Mammary epithelial cell (primary cell): ENCODE measurements at regions of chr4 and their contacts with region 1.

Region 1: DNA sequence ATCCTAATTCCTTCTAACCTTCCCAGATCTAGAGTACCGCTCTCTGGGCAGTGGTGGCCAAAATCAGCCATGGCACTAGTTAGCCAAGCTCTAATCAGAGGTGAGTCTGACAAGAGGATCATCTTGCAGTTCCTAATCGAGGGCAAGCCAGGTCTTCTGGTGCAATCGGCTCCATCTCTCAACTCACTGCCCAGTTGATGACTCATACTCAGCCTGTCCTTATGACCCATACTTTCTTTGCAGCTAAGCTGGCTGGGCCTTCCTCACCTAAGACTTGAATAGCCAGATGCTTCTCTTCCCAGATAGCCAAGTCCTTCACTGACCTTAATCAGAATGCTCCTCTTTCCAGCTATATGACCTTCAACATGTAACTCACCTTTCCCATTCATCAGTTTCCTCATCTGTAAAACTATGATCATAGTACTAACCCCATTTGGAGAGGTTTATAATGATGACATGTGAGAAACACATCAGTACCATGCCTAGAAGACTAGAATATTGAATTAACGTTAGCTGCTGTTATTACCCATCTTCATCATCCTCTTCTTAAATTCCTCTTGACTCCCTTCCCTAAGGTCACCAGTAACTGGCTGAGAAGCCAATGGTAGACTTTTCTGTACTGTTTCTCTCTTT is 57.1 kb downstream of the RELL1 start:
- DNase-seq: peak; percentile 60
- H3K4me3 ChIP-seq: no peak overlapping the region
- H3K27ac ChIP-seq: no peak overlapping the region
- H3K4me1 ChIP-seq: peaks cover 5% of the 10 kb centered on the region
- H3K27me3 ChIP-seq: no peaks in the 10 kb centered on the region
- CTCF ChIP-seq: no peak

Region 2: GRCh38 chr4:37588150-37588549 is 40.9 kb before region 1 on chr4:
- CTCF ChIA-PET with region 1: no interaction called
- dilution Hi-C with region 1: loop called (anchors 5 kb)
- in situ Hi-C with region 1: no loop called
- intact Hi-C with region 1: no loop called
- DNase-seq: no peak
- H3K4me3 ChIP-seq: no peak overlapping the region
- H3K27ac ChIP-seq: no peak overlapping the region
- H3K4me1 ChIP-seq: no peaks in the 10 kb centered on the region
- H3K27me3 ChIP-seq: no peaks in the 10 kb centered on the region
- CTCF ChIP-seq: no peak

Region 3: GRCh38 chr4:37603070-37603468 is 26.0 kb before region 1 on chr4:
- CTCF ChIA-PET with region 1: no interaction called
- dilution Hi-C with region 1: no loop called
- in situ Hi-C with region 1: no loop called
- intact Hi-C with region 1: no loop called
- DNase-seq: peak; percentile 45
- H3K4me3 ChIP-seq: no peak overlapping the region
- H3K27ac ChIP-seq: no peak overlapping the region
- H3K4me1 ChIP-seq: peaks cover 7% of the 10 kb centered on the region
- H3K27me3 ChIP-seq: no peaks in the 10 kb centered on the region
- CTCF ChIP-seq: peak; percentile 90 to 97